Ovary (tissue), 10 donors: ENCODE measurements at regions of chr1 and their contacts with region 1.

Region 1: DNA sequence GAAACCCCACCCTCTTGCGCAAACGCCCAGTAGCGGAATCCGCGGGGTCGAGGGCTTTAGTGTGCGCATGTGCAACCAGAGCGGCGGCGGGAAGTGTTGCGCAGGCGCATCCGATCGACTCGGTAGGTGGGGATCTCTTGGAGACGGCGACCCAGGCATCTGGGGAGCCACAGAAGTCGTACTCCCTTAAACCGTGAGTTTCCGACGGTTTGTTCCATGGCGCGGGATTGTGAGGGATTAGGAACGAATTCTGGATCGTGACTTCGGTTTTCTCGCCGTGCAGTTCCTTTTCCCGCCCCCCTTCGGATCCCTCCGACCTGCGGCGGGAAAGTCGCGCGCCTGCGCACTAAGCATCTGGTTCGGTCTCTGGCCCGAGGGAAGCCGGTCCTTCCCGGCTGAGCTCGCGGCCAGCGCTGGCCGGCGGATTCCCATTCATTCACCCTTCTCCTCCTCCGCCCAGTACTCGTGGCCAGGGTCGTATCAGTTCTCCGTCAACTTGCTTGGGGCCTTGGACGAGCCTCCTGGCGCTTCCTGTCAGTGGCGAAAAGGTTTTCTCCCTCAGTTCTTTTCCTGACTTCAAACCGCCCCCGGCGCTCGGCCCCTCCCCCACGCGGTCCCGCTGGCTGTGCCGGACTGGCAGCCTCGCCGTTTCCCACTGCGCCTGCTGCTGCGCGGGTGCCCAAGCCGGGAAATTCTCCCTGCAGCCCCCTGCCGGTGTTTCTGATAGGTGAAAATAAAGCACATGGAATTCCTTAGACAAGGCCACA is at the start of gene CDC7:
- DNase-seq: peak; percentile 93 to 96 (median 95)
- H3K4me3 ChIP-seq: peak within 1 kb of the TSS; percentile 56
- H3K27ac ChIP-seq: peak within 1 kb of the TSS; percentile 20 to 77
- H3K4me1 ChIP-seq: peaks cover 4% of the 10 kb centered on the region
- H3K27me3 ChIP-seq: no peaks in the 10 kb centered on the region
- CTCF ChIP-seq: peak; percentile 12 to 30 (median 28)
- EP300 ChIP-seq: no peak
- POLR2A ChIP-seq: peak; percentile 35
- total RNA-seq, gene CDC7: 1.2 to 5.5 (median 2.9) TPM

Region 2: DNA sequence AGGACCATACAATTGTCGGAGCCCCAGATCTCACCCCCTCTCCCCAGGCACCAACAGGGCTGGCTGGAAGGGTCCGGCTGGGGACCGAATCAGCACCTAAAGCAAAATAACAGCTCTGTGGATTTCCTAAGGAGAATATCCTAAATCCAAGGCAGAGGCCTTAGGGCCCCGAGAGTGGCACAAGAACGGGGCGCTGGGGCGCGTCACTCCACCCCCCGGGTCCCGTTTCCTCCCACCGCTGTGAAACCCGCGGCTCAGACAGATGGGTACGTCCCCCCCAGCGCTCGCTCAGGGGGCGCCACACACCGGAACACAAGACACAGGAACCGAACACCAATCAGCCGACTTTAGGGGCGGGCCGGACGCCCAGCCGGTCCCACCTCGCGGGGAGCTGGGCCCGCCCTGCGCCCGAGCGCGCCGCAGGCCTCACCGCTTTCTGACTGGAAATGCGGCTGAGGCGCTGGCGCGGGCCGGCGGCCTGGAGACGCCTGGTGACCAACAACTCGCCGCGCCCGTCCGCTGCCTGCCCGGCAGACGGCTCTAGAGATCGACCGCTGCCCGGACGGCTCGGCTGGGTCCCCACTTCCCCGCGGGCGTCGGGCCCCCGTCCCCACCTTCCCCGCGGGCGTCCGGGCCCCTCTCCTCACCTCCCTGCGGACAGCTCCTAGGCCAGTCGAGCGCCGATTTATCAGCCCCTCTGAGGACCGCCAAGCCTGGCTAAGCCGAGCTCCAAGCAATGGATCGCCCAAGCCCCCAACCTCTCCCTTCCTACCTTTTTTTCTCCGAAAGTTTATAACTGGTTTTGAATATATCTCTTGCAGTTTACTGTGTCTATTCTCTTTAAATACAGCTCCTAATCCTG is 96.6 kb before region 1 on chr1 and contains the start of gene HFM1:
- intact Hi-C with region 1: loop called in 1 of 4 experiments (anchors 10 kb)
- DNase-seq: peak; percentile 85 to 91 (median 89)
- H3K4me3 ChIP-seq: peak within 1 kb of the TSS; percentile 39
- H3K27ac ChIP-seq: peak within 1 kb of the TSS; percentile 65 to 93
- H3K4me1 ChIP-seq: no peaks in the 10 kb centered on the region
- H3K27me3 ChIP-seq: no peaks in the 10 kb centered on the region
- CTCF ChIP-seq: no peak
- EP300 ChIP-seq: peak; percentile 34
- POLR2A ChIP-seq: peak; percentile 41
- total RNA-seq, gene HFM1: 5.7 to 17.2 (median 8.5) TPM

Region 3: GRCh38 chr1:91440845-91441244 is 60.1 kb before region 1 on chr1:
- intact Hi-C with region 1: no loop called
- DNase-seq: no peak
- H3K4me3 ChIP-seq: no peak overlapping the region
- H3K27ac ChIP-seq: no peak overlapping the region
- H3K4me1 ChIP-seq: no peaks in the 10 kb centered on the region
- H3K27me3 ChIP-seq: no peaks in the 10 kb centered on the region
- CTCF ChIP-seq: no peak
- EP300 ChIP-seq: no peak
- POLR2A ChIP-seq: no peak

Region 4: DNA sequence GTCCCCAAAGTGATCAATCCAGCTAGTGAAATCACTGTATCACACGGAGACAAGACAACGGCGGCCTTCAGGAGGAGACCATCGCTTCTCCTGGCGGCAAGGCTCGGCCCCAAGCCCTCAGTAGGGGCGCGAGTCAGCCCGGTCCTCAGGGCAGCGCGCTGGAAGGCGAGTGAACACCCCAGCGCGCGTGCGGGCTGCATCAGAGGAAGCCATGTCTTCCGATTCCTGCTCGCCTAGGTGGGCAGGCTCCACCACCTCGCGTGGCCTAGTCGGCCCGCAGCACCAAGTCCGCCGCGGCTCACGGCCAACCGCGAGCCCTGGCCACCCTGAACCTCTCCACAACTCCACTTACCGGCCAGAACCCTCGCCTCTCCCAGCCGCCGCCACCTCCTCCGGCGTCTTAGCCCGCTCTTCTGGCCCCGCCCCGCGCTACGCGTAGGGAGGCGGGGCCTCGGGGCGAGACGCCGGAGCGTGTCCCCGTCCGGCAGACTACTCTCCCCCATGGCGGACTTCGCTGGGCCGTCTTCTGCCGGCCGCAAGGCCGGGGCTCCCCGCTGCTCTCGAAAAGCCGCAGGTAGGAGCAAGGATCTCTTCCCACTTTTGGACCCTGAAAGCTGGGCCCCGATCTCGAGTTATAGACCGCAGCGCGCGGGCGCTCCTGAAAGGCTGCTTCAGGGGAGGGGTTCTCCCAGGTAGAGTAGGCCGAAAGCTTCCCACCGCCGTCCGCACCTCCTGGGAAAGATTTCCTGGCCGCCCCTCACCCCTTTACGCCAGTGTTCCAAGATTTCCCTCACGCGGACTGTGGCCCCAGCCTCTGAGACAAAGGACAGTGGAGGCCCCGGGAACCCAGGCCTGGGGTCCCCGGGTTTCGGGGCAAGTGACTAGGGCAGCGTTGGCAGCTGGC is 797.9 kb after region 1 on chr1 and contains the starts of genes GLMN and RPAP2:
- intact Hi-C with region 1: loop called in 2 of 4 experiments (anchors 10 kb)
- DNase-seq: peak; percentile 77 to 88 (median 84)
- H3K4me3 ChIP-seq: peak within 1 kb of the TSS; percentile 66
- H3K27ac ChIP-seq: peak within 1 kb of the TSS; percentile 79 to 90
- H3K4me1 ChIP-seq: peaks cover 5% of the 10 kb centered on the region
- H3K27me3 ChIP-seq: no peaks in the 10 kb centered on the region
- CTCF ChIP-seq: no peak
- EP300 ChIP-seq: no peak
- POLR2A ChIP-seq: peak; percentile 61
- total RNA-seq, gene GLMN: 4.7 to 14.6 (median 10.5) TPM
- total RNA-seq, gene RPAP2: 6.3 to 46.4 (median 38.0) TPM